ENCODE measurements at regions of chr1 and their contacts with region 1.

Region 1: DNA sequence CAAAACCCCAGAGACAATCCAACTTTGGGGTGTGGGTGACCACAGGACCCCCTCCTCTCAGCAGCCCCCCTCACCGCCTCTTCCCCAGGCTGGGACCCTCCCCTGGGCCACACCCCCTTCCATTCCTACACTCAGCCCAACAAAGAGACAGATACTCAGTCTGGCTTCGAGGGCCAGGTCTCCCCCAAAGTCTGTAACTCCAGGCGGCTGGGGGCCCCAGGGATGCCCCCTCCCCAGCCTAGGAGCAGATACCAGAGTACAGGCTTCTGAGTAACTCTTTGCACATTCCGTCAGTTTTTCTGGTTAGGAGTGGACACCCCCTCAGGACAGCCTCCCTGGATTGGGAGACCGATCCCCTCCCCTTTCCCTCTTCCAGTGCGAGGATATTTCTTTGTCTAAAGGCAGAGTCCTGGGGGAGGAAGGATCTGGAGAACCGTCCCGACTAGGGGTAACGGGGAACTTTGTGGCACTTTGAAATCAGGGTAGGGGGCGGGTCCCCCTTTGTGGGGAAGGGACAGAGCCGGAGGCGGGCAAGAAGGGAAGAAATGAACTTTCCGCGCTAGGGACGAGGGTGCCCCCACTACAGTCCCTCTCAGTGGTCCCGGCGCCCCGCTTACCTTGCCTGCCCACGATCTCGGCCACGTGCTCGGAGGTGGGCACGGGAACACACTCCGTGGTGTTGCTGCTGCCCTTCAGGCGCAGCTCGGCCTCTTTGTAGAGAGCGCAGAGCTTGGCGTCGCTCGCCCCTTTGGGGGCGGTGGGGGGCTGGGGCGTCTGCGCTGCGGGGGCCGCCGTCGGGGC is 1.1 kb downstream of the MEX3A start:
- DNase-seq: peak in 4 of 5 donors; percentile 47 to 68 (median 60)
- H3K4me3 ChIP-seq: peak overlapping the region; percentile 81
- H3K27ac ChIP-seq: peak overlapping the region; percentile 47 to 66
- H3K4me1 ChIP-seq: peaks cover 2% of the 10 kb centered on the region
- H3K27me3 ChIP-seq: no peaks in the 10 kb centered on the region
- CTCF ChIP-seq: no peak
- EP300 ChIP-seq: no peak
- POLR2A ChIP-seq: no peak

Region 2: GRCh38 chr1:156054500-156055280 is 26.4 kb before region 1 on chr1 and contains the start of gene LAMTOR2:
- intact Hi-C with region 1: loop called in 1 of 4 experiments (anchors 2 kb)
- DNase-seq: peak; percentile 96 to 98 (median 98)
- H3K4me3 ChIP-seq: peak within 1 kb of the TSS; percentile 83
- H3K27ac ChIP-seq: peak within 1 kb of the TSS; percentile 82 to 84
- H3K4me1 ChIP-seq: no peaks in the 10 kb centered on the region
- H3K27me3 ChIP-seq: no peaks in the 10 kb centered on the region
- CTCF ChIP-seq: peak in 2 of 3 donors; percentile 8 to 25
- EP300 ChIP-seq: no peak
- POLR2A ChIP-seq: peak; percentile 72
- total RNA-seq, gene LAMTOR2: 20.1 to 66.1 (median 24.9) TPM